Natural killer cell (primary cell): ENCODE measurements at regions of chr22 and their contacts with region 1.

Region 1: GRCh38 chr22:39532215-39533071 is at the start of gene RPS19BP1:
- DNase-seq: peak; percentile 96 to 100
- ATAC-seq: peak; percentile 86 to 94 (median 87)
- H3K4me3 ChIP-seq: peak within 1 kb of the TSS; percentile 90
- H3K4me3 Mint-ChIP-seq: peak within 1 kb of the TSS; percentile 94
- H3K27ac ChIP-seq: peak within 1 kb of the TSS; percentile 87
- H3K27ac Mint-ChIP-seq: peak within 1 kb of the TSS; percentile 92 to 97
- H3K4me1 ChIP-seq: peaks cover 54% of the 10 kb centered on the region
- H3K4me1 Mint-ChIP-seq: peaks cover 30 to 54% of the 10 kb centered on the region in 2 donors
- H3K27me3 ChIP-seq: no peaks in the 10 kb centered on the region
- H3K27me3 Mint-ChIP-seq: no peaks in the 10 kb centered on the region
- CTCF ChIP-seq: no peak
- total RNA-seq, gene RPS19BP1: 56.7 to 66.5 (median 61.3) TPM

Region 2: DNA sequence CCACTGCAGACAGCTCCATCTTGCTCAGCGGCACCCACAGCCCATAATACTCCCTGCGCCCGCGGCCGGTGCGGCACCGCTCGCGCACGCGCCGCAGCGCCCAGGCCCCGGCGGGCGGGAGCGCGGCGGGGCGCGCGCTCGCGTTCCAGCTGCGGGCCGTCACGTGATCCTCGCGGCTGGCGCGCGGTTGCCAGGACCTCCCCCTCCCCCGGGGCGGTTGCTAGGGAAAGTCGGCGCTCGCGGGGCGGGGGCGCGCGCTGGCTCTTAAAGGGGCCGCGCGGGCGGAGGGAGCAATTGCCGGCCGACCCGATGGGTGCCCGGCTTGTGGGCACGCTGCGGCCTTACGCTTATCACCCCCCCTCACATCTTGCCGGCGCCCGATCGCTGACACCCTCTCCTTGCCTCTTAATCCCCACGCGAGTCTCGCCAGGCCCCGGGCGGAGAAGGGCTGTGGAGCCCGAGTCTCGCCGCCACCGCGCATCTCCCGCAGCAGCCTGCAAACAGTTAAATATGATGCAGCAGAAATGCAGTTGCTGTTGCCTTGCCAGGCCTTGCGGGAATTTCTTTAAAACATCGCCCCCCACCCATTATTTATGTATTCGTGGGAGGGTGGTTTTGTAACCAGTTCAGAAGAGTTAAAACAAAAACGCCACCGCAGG is 660.1 kb before region 1 on chr22 and contains the start of gene CBX6:
- intact Hi-C with region 1: loop called (anchors 5 kb)
- DNase-seq: peak; percentile 96 to 97
- ATAC-seq: peak; percentile 72 to 91 (median 84)
- H3K4me3 ChIP-seq: peak within 1 kb of the TSS; percentile 58
- H3K4me3 Mint-ChIP-seq: peak within 1 kb of the TSS; percentile 87
- H3K27ac ChIP-seq: peak within 1 kb of the TSS; percentile 64
- H3K27ac Mint-ChIP-seq: peak within 1 kb of the TSS; percentile 76 to 91
- H3K4me1 ChIP-seq: peaks cover 50% of the 10 kb centered on the region
- H3K4me1 Mint-ChIP-seq: peaks cover 26 to 45% of the 10 kb centered on the region in 2 donors
- H3K27me3 ChIP-seq: no peaks in the 10 kb centered on the region
- H3K27me3 Mint-ChIP-seq: peaks cover 0 to 11% of the 10 kb centered on the region in 2 donors
- CTCF ChIP-seq: no peak
- total RNA-seq, gene CBX6: 68.0 to 81.5 (median 75.7) TPM

Region 3: DNA sequence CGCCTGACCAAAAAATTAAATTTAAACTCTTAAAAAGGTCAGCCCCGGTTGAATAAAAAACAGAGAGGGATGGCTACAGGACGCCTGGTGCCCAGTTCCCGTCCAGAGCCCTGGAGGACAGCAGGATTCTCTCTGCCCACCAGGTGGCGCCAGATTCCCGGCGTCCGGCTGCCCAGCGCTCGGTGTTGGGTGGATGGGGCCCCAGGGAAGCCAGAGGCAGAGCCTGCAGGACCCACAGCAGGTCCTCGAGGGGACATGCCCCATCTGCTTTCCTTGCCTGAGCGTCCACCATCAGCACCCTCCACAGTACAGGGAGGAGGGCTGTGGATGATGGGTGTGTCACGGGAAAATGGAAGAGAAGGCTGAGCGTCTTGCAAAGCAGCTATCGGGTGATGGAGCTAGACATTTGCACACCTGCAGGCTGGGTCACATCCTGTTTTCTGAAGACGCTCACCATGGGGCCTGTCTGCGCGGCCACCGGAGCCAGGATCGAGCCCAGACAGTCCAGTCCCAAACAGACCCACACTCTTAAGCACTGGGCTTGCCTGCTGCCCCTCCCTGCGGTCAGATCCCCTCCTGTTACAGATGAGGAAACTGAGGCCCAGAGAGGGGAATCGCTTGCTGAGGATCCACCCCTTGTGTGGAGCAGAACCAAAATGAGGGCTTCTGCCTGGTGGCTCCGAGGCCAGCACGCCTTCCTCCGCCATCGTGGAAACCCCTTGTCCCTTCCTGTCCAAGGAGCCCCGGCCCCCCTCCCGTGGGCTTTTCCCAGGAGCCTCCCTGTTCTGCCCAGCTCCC is 361.4 kb before region 1 on chr22:
- intact Hi-C with region 1: loop called (anchors 2 kb)
- DNase-seq: peak; percentile 87 to 91
- ATAC-seq: peak; percentile 44 to 77 (median 60)
- H3K4me3 ChIP-seq: no peak overlapping the region
- H3K4me3 Mint-ChIP-seq: peak overlapping the region; percentile 70
- H3K27ac ChIP-seq: peak overlapping the region; percentile 56
- H3K27ac Mint-ChIP-seq: peak overlapping the region; percentile 71 to 98
- H3K4me1 ChIP-seq: peaks cover 56% of the 10 kb centered on the region
- H3K4me1 Mint-ChIP-seq: peaks cover 34 to 55% of the 10 kb centered on the region in 2 donors
- H3K27me3 ChIP-seq: no peaks in the 10 kb centered on the region
- H3K27me3 Mint-ChIP-seq: peaks cover 0 to 6% of the 10 kb centered on the region in 2 donors
- CTCF ChIP-seq: peak; percentile 93

Region 4: DNA sequence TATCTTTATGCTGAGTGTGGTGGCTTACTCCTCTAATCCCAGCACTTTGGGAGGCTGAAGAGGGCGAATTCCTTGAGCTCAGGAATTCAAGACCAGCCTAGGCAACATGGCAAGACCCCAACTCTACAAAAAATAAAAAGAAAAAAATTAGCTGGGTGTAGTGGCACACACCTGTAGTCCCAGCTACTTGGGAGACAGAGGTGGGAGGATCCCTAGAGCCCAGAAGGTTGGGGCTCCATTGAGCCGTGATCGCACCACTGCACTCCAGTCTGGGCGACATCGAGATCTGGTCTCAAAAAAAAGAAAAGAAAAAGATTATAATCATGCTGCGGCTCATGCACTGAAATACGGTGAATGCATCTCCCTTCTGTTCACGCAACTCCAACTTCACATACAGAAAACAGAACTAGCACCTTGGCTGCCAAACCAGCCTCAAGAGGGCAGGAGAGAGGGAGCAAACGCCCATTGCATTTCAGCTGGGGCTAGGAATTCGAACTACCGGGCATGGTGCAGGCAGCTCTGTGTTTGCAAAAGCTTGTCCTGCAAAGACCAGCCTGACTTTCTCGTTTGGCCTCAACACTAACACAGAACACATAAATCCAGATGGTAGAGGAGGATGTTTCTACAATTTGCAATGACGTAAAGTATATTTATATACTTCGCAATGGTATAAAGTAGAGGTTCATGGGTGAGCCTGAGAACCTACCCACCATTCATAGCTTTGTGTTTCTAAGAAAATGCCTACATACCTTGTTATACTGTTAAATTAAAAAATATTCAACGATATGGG is 189.0 kb before region 1 on chr22:
- intact Hi-C with region 1: loop called (anchors 2 kb)
- DNase-seq: peak; percentile 33 to 78
- ATAC-seq: peak; percentile 61 to 84 (median 78)
- H3K4me3 ChIP-seq: no peak overlapping the region
- H3K4me3 Mint-ChIP-seq: no peak overlapping the region
- H3K27ac ChIP-seq: no peak overlapping the region
- H3K27ac Mint-ChIP-seq: no peak overlapping the region
- H3K4me1 ChIP-seq: peaks cover under 1% of the 10 kb centered on the region
- H3K4me1 Mint-ChIP-seq: peaks cover 5 to 6% of the 10 kb centered on the region in 2 donors
- H3K27me3 ChIP-seq: no peaks in the 10 kb centered on the region
- H3K27me3 Mint-ChIP-seq: peaks cover 16 to 22% of the 10 kb centered on the region in 2 donors
- CTCF ChIP-seq: peak; percentile 63

Region 5: GRCh38 chr22:39439170-39439569 is 93.3 kb before region 1 on chr22:
- intact Hi-C with region 1: no loop called
- DNase-seq: no peak
- ATAC-seq: peak in 2 of 3 donors; percentile 29 to 40
- H3K4me3 ChIP-seq: no peak overlapping the region
- H3K4me3 Mint-ChIP-seq: peak overlapping the region; percentile 9
- H3K27ac ChIP-seq: no peak overlapping the region
- H3K27ac Mint-ChIP-seq: no peak overlapping the region
- H3K4me1 ChIP-seq: peaks cover 10% of the 10 kb centered on the region
- H3K4me1 Mint-ChIP-seq: no peaks in the 10 kb centered on the region
- H3K27me3 ChIP-seq: no peaks in the 10 kb centered on the region
- H3K27me3 Mint-ChIP-seq: peaks cover 0 to 9% of the 10 kb centered on the region in 2 donors
- CTCF ChIP-seq: no peak

Region 6: DNA sequence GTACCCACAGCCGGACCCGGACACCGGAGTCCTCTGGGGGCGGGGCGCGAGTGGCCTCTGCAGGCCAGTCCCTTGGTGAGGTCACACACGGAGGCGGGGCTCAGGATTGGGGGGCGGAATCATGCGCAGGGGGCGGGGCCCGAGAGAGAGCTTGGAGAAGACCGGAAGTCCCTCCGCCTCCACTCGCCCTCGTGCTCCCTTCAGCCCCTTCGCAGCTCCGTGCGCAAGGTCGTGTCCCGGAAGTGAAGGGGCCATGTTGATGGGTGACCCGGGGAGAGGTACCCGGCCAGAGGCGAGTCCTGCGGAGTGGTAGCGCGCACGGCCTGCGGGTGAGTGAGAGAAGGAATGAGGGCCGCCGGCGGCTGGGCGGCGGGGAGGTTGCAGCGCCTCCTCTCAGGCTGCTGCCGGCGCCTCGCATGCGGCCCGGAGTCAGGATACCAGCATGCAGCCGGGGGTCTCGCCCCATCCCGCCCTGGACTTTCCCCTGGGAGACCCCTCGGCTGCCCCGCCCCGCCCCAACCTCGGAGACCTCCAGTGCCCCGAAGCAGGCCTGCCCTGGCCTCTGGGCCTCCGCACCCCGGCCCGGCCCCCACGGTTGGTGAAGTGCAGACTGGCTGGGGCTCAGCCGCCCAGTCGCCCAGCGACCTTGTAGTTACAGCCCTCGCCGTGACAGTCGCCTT is 30.2 kb before region 1 on chr22 and contains the start of gene MIEF1:
- intact Hi-C with region 1: loop called (anchors 1 kb)
- DNase-seq: peak; percentile 89 to 95
- ATAC-seq: peak; percentile 97 to 99 (median 97)
- H3K4me3 ChIP-seq: peak within 1 kb of the TSS; percentile 76
- H3K4me3 Mint-ChIP-seq: peak within 1 kb of the TSS; percentile 91
- H3K27ac ChIP-seq: peak within 1 kb of the TSS; percentile 80
- H3K27ac Mint-ChIP-seq: peak within 1 kb of the TSS; percentile 90 to 94
- H3K4me1 ChIP-seq: peaks cover 26% of the 10 kb centered on the region
- H3K4me1 Mint-ChIP-seq: peaks cover 27 to 50% of the 10 kb centered on the region in 2 donors
- H3K27me3 ChIP-seq: no peaks in the 10 kb centered on the region
- H3K27me3 Mint-ChIP-seq: no peaks in the 10 kb centered on the region
- CTCF ChIP-seq: no peak
- total RNA-seq, gene MIEF1: 16.1 to 27.6 (median 25.1) TPM

Region 7: DNA sequence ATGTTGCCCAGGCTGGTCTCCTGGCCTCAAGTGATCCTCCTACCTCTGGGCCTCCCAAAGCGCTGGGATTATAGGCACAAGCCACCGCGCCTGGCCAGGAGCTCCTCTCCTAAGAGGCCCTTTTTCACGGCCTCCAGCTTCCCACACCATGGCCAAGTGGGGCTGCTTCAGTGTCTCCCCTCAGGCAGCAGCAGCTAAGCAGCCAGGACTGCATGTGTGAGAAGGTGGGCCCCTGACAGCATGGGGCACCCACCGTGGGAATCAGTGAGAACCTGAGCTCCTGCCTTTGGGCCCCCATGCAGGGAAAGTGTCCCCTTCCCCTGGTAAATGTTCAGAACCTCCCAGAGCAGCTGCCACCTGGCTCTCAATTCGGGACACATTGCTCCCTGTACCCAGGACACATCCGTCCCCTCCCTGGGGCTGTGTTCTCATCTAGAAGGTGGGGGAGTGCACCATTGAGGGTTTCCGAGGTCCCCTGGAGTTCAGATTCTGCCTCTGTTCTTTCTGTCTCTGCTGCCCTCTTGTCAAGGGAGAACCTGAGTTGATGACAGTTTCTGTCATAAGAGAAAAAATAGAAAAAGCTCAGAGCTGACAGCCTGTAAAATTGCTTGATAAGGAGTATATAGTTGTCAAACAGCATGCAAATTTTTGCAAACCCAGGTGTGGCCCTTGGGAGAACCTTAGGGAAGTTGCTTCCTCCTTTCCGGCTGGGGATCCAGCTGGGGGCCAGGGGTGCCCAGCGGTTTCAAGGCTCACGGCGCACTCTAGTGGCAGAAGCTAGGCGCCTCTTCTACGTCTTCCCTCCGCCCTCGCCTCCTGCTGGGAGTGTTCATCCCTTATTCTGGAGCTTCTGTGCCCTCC is 492.0 kb after region 1 on chr22:
- intact Hi-C with region 1: loop called (anchors 2 kb)
- DNase-seq: peak; percentile 39 to 81
- ATAC-seq: peak; percentile 65 to 82 (median 82)
- H3K4me3 ChIP-seq: no peak overlapping the region
- H3K4me3 Mint-ChIP-seq: no peak overlapping the region
- H3K27ac ChIP-seq: no peak overlapping the region
- H3K27ac Mint-ChIP-seq: no peak overlapping the region
- H3K4me1 ChIP-seq: peaks cover 7% of the 10 kb centered on the region
- H3K4me1 Mint-ChIP-seq: no peaks in the 10 kb centered on the region
- H3K27me3 ChIP-seq: no peaks in the 10 kb centered on the region
- H3K27me3 Mint-ChIP-seq: peaks cover 0 to 2% of the 10 kb centered on the region in 2 donors
- CTCF ChIP-seq: peak; percentile 84

Region 8: DNA sequence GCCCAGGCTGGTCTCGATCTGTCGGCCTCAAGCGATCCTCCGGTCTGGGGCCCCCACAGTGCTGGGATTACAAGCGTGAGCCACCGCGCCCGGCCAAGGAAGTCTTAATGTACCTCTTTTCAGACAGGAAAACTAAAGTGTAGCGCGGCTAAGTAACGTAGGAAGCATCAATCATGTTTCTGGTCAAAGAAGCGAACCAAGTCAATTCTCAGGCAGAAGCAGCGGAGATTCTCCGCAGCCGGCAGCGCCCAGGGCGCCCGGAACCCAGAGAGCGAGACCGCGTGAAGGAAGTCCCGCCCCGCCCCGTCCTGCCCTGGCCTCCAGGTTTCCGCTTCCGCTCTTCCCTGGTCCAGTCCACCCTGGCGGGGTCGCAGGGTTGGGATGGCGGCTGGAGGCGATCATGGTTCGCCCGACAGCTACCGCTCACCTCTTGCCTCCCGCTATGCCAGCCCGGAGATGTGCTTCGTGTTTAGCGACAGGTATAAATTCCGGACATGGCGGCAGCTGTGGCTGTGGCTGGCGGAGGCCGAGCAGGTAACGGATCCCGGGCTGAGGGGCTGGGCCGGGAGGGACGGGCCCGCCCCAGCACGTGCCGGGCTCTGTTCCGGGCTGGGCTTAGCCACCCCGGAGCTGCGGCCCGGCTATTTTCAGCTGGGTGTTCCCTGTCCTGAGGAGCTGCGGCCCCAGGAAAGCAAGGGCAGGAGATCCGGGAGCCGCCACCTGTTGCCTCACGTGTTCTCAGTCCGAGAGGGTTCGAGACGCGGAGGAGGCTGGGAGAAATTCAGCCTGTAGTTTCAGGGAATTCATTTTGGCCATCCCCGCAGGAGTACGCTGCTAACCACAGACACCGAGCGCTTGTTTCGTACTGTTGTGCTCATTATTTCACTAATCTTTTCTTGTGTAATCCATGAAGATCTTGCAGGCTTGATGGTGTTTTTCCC is 814.0 kb after region 1 on chr22 and contains the start of gene ADSL:
- intact Hi-C with region 1: loop called (anchors 1 kb)
- DNase-seq: peak; percentile 74 to 90
- ATAC-seq: peak; percentile 89 to 93 (median 91)
- H3K4me3 ChIP-seq: peak within 1 kb of the TSS; percentile 76
- H3K4me3 Mint-ChIP-seq: peak within 1 kb of the TSS; percentile 98
- H3K27ac ChIP-seq: peak within 1 kb of the TSS; percentile 65
- H3K27ac Mint-ChIP-seq: peak within 1 kb of the TSS; percentile 89
- H3K4me1 ChIP-seq: peaks cover 25% of the 10 kb centered on the region
- H3K4me1 Mint-ChIP-seq: peaks cover 23 to 29% of the 10 kb centered on the region in 2 donors
- H3K27me3 ChIP-seq: no peaks in the 10 kb centered on the region
- H3K27me3 Mint-ChIP-seq: no peaks in the 10 kb centered on the region
- CTCF ChIP-seq: no peak
- total RNA-seq, gene ADSL: 31.3 to 49.8 (median 41.2) TPM